Left lung (tissue), 14 donors: ENCODE measurements at regions of chr22 and their contacts with region 1.

Region 1: DNA sequence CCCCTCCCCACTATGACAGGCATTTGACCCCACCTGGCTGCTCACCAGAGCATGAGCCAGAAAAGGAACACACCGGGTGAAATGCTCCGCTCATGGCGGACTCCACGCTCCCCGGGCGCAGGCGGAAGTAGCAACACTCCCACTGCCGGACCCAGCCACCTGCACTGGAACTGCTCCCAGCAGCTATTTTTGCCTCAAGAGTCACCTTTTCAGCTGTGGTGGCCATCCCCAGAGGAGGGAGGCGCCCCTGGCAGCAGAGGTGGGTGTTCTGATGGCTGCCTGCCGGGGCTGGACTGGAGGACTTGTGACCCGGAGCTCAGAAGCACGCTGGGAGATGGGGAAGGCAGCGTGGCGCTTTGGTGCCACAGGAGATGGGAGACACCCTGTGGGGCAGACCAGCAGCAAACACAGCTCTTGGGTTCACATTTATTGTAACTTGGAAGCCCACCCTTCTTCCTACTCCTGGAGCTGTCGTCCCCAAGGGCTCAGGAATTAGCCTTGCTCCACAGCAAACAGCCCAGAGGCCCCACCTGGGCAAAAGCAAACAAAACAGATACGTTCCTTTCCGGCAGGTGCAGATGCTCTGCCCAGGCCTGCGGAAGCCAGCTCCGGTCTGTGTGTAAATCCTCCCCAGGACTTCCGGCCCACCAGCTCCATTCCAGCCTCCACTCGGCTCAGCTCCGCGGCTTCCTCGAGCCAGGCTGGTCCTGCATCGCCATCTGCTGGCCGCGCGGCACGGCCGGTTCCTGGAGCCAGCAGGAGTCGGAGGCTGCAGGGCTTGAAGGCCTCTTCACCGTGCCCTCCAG is 3.7 kb downstream of the RPS19BP1 start:
- DNase-seq: peak; percentile 78 to 99 (median 93)
- ATAC-seq: peak; percentile 74
- H3K4me3 ChIP-seq: peak overlapping the region in 1 of 2 donors; percentile 21
- H3K27ac ChIP-seq: peak overlapping the region in 1 of 2 donors; percentile 58
- H3K4me1 ChIP-seq: peaks cover 36 to 85% of the 10 kb centered on the region in 2 donors
- H3K27me3 ChIP-seq: no peaks in the 10 kb centered on the region
- CTCF ChIP-seq: peak; percentile 92 to 96

Region 2: GRCh38 chr22:39490135-39490798 is 38.6 kb before region 1 on chr22:
- intact Hi-C with region 1: loop called in 1 of 2 experiments (anchors 5 kb)
- DNase-seq: peak in 2 of 4 donors; percentile 83 to 94
- ATAC-seq: peak; percentile 86
- H3K4me3 ChIP-seq: no peak overlapping the region
- H3K27ac ChIP-seq: no peak overlapping the region
- H3K4me1 ChIP-seq: peaks cover 0 to 32% of the 10 kb centered on the region in 2 donors
- H3K27me3 ChIP-seq: no peaks in the 10 kb centered on the region
- CTCF ChIP-seq: no peak